ENCODE measurements at regions of chr12 and their contacts with region 1.

Region 1: DNA sequence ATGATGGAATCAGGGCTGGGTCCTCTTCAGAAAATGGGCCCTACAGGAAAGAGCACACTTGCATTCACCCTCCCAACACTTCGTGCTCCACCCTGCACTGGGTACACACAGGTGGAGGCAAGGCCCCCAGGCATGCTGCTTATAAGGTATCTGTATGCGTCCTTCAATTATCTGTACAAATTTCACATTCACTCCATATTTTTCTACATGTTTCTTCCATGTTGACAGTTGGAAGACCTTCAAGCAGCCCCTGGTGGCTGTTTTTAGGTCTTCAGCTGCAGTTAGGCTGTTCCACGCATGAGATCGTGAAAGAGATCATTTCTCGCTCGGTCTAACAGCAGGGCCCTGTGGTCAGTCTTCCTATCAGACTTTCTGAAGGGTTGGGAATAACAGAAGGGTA is 47.1 kb downstream of the PLXNC1 start:
- DNase-seq: no peak
- H3K4me3 ChIP-seq: no peak overlapping the region
- H3K4me3 Mint-ChIP-seq: no peak overlapping the region
- H3K27ac ChIP-seq: no peak overlapping the region
- H3K27ac Mint-ChIP-seq: peak overlapping the region in 4 of 7 donors; percentile 22 to 76 (median 44)
- H3K4me1 ChIP-seq: no peaks in the 10 kb centered on the region
- H3K4me1 Mint-ChIP-seq: peaks cover 3% of the 10 kb centered on the region
- H3K27me3 ChIP-seq: no peaks in the 10 kb centered on the region
- H3K27me3 Mint-ChIP-seq: peaks cover 0 to 1% (median 0%) of the 10 kb centered on the region in 3 donors
- CTCF ChIP-seq: no peak

Region 2: GRCh38 chr12:94163850-94164249 is 31.6 kb before region 1 on chr12:
- intact Hi-C with region 1: loop called in 1 of 2 experiments (anchors 5 kb)
- DNase-seq: no peak
- H3K4me3 ChIP-seq: no peak overlapping the region
- H3K4me3 Mint-ChIP-seq: no peak overlapping the region
- H3K27ac ChIP-seq: no peak overlapping the region
- H3K27ac Mint-ChIP-seq: peak overlapping the region in 1 of 7 donors; percentile 7
- H3K4me1 ChIP-seq: peaks cover 0 to under 1% of the 10 kb centered on the region in 2 donors
- H3K4me1 Mint-ChIP-seq: peaks cover 46% of the 10 kb centered on the region
- H3K27me3 ChIP-seq: no peaks in the 10 kb centered on the region
- H3K27me3 Mint-ChIP-seq: peaks cover 0 to 2% (median 1%) of the 10 kb centered on the region in 3 donors
- CTCF ChIP-seq: no peak